Caco-2 (cell line): ENCODE measurements at regions of chr4 and their contacts with region 1.

Region 1: DNA sequence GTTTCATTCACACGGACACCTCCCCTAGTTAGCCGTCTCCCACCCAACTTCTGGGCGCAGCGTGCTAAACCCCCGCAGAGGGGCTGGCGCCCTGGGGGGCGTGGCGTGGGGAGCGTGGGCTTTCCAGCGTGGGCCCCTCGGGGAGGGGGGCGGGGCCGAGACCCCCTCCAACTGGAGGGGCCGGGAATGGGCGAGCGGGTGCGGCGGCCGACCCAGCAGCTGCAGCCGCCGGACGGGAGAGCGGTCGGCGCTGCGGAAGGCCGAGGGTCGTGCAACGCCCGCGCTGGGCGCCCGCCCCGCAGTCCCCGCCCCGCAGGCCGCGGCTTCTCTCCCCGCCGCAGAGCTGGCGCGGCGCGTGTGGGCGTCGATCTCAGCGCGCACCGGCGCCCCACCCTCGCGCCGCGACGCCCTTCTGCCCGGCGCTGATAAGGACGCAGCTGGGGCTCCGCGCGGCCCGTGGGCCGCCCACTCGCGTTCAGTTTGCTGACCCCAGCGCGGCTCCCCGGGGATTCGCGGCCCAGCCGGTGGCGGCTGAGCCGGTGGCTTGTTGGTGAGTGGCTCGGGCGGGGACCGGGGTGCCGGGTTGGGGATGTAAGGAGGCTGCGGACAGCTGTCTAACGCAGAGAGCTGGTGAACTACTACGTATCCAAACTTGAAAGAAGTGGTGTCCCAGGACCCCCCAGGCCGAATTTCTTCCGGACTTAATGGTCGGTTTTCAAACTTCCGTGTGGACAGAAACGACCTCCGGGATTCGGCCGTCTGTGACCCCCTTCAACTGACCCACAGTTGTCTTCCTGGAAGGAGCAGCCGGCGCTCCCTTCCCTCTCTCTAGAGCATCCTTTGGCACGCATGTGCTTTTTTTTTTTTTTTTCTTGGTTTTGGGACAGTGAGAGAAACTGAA is 1.5 kb downstream of the FHDC1 start:
- DNase-seq: peak in 1 of 2 experiments; percentile 28
- H3K4me3 ChIP-seq: peak overlapping the region; percentile 60
- H3K4me3 Mint-ChIP-seq: peak overlapping the region; percentile 80
- H3K27ac Mint-ChIP-seq: no peak overlapping the region
- H3K4me1 ChIP-seq: no peaks in the 10 kb centered on the region
- H3K4me1 Mint-ChIP-seq: peaks cover 7% of the 10 kb centered on the region
- H3K27me3 ChIP-seq: no peaks in the 10 kb centered on the region; the same call in 1 of the 2 replicates
- H3K27me3 Mint-ChIP-seq: peaks cover 4% of the 10 kb centered on the region
- CTCF ChIP-seq: no peak

Region 2: GRCh38 chr4:152735396-152735859 is 202.2 kb before region 1 on chr4:
- CTCF ChIA-PET with region 1: no interaction called
- POLR2A ChIA-PET with region 1: no interaction called
- intact Hi-C with region 1: no loop called
- DNase-seq: no peak
- H3K4me3 ChIP-seq: no peak overlapping the region
- H3K4me3 Mint-ChIP-seq: no peak overlapping the region
- H3K27ac Mint-ChIP-seq: no peak overlapping the region
- H3K4me1 ChIP-seq: 0 out of 2 replicates have a peak, but pooled peaks cover 4% of the 10 kb centered on the region
- H3K4me1 Mint-ChIP-seq: peaks cover 9% of the 10 kb centered on the region
- H3K27me3 ChIP-seq: no peaks in the 10 kb centered on the region
- H3K27me3 Mint-ChIP-seq: no peaks in the 10 kb centered on the region
- CTCF ChIP-seq: peak; percentile 45 to 47

Region 3: DNA sequence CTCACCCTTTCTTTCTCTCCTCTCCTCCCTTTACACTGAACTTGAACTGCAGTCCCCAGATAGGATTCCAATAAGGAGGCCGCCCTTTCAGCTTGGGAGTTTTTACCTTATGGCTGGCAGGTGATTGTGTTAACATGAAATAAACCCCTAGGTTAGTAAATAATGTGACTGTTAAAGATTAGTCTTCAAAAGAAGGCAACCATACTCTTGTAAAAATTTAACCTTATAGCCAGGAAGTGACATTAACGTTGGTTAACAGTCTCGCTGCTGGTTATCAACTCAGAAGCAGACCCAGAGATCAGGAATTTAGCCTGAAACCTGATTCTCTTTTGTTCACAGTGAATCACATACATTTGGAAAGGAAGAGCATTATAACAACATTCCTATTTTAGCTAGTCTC is 13.8 kb after region 1 on chr4:
- CTCF ChIA-PET with region 1: no interaction called
- POLR2A ChIA-PET with region 1: no interaction called
- intact Hi-C with region 1: loop called (anchors 1 kb)
- DNase-seq: peak in 1 of 2 experiments; percentile 25
- H3K4me3 ChIP-seq: no peak overlapping the region
- H3K4me3 Mint-ChIP-seq: peak overlapping the region; percentile 27
- H3K27ac Mint-ChIP-seq: no peak overlapping the region
- H3K4me1 ChIP-seq: no peaks in the 10 kb centered on the region
- H3K4me1 Mint-ChIP-seq: peaks cover 11% of the 10 kb centered on the region
- H3K27me3 ChIP-seq: no peaks in the 10 kb centered on the region
- H3K27me3 Mint-ChIP-seq: no peaks in the 10 kb centered on the region
- CTCF ChIP-seq: no peak

Region 4: DNA sequence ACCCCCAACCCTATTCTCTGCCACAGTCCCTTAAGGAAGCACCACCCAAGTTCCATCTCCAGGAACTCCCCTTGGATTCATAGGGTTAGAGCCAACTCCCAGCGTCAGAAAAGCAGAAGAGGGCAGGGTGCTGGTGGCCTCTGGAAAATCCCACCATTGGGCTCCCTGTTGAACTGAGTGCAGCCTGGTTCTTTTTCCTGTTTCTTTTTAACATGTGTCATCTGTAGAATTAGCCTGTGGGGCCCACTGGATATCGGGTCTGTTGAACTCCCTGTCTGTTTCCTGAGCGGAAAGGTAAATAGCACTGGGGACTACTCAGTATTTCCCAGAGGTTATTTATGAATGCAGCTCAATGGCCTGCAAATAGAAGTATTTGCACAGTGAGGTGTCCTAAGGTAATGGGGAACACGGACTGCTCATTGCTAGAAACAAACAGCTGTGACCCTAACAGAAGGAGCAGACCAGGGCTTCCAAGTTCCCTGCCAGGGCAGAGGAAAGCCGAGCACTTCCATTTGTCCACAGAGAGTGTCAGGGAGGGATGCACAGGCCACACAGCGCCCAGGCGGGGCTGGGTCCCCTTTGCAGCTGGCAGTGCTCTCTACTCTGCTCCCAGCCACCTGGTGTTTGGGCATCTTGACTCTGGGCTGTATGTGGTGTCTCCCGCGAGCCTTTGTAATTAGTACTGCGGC is 101.2 kb after region 1 on chr4:
- CTCF ChIA-PET with region 1: no interaction called
- POLR2A ChIA-PET with region 1: no interaction called
- intact Hi-C with region 1: loop called (anchors 5 kb)
- DNase-seq: peak; percentile 35 to 38
- H3K4me3 ChIP-seq: no peak overlapping the region
- H3K4me3 Mint-ChIP-seq: no peak overlapping the region
- H3K27ac Mint-ChIP-seq: no peak overlapping the region
- H3K4me1 ChIP-seq: no peaks in the 10 kb centered on the region
- H3K4me1 Mint-ChIP-seq: peaks cover 15% of the 10 kb centered on the region
- H3K27me3 ChIP-seq: no peaks in the 10 kb centered on the region
- H3K27me3 Mint-ChIP-seq: no peaks in the 10 kb centered on the region
- CTCF ChIP-seq: no peak

Region 5: GRCh38 chr4:153083447-153083947 is 145.9 kb after region 1 on chr4:
- CTCF ChIA-PET with region 1: interaction called, 8 read pairs
- POLR2A ChIA-PET with region 1: no interaction called
- intact Hi-C with region 1: loop called (anchors 5 kb)
- DNase-seq: peak; percentile 72
- H3K4me3 ChIP-seq: no peak overlapping the region
- H3K4me3 Mint-ChIP-seq: no peak overlapping the region
- H3K27ac Mint-ChIP-seq: peak overlapping the region; percentile 79
- H3K4me1 ChIP-seq: peaks cover 14% of the 10 kb centered on the region; the same call in 1 of the 2 replicates
- H3K4me1 Mint-ChIP-seq: peaks cover 15% of the 10 kb centered on the region
- H3K27me3 ChIP-seq: no peaks in the 10 kb centered on the region
- H3K27me3 Mint-ChIP-seq: no peaks in the 10 kb centered on the region
- CTCF ChIP-seq: peak; percentile 41 to 60